ENCODE measurements at regions of chr18 and their contacts with region 1.

Region 1: DNA sequence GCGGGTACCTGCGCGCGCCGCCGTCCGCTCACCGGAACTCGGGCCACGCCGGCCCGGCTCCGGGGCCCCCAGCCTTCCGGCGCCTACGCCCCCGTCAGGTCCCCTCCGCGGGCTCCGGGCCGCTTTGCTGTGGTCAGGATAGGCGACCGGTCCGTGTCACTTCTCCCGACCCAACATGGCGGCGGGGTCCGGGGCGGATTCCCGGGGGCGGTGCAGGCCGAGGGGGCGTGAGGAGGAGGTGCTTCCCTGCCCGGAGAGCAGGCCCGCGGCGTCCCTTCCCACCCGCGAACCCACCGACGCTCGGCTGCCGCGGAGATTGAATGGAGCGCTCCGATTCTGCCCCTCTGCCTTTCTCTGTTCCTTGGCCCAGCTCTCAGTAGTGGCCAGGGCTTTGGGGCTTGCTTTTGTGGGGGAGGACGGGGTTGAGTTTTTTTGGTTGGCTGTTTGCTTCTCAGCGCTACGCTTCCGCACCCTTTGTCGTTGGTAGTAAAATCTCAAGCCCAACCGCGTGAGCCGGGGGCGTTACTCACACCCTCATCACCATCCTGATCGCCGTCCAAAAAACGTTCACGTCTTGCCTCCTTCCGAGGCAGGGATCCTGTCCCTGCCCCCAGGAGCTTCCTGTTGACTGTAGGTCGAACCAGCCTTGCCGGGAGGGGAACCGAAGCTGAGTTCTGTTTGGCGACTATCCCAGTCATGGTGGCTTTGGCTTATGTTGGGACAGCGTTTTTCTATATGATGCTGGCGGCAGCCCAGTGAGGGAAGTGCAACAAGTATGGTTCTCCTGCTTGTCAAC is 532 bp upstream of the YES1 start:
- DNase-seq: peak; percentile 86
- H3K4me3 Mint-ChIP-seq: peak overlapping the region; percentile 87
- H3K27ac Mint-ChIP-seq: peak overlapping the region; percentile 99
- H3K4me1 Mint-ChIP-seq: peaks cover 57% of the 10 kb centered on the region
- H3K27me3 Mint-ChIP-seq: peaks cover 6% of the 10 kb centered on the region

Region 2: GRCh38 chr18:111292-112014 is 701.1 kb before region 1 on chr18:
- CTCF ChIA-PET with region 1: no interaction called
- POLR2A ChIA-PET with region 1: no interaction called
- intact Hi-C with region 1: loop called (anchors 5 kb)
- DNase-seq: peak; percentile 80
- H3K4me3 Mint-ChIP-seq: peak overlapping the region; percentile 73
- H3K27ac Mint-ChIP-seq: peak overlapping the region; percentile 86
- H3K4me1 Mint-ChIP-seq: peaks cover 12% of the 10 kb centered on the region
- H3K27me3 Mint-ChIP-seq: no peaks in the 10 kb centered on the region

Region 3: DNA sequence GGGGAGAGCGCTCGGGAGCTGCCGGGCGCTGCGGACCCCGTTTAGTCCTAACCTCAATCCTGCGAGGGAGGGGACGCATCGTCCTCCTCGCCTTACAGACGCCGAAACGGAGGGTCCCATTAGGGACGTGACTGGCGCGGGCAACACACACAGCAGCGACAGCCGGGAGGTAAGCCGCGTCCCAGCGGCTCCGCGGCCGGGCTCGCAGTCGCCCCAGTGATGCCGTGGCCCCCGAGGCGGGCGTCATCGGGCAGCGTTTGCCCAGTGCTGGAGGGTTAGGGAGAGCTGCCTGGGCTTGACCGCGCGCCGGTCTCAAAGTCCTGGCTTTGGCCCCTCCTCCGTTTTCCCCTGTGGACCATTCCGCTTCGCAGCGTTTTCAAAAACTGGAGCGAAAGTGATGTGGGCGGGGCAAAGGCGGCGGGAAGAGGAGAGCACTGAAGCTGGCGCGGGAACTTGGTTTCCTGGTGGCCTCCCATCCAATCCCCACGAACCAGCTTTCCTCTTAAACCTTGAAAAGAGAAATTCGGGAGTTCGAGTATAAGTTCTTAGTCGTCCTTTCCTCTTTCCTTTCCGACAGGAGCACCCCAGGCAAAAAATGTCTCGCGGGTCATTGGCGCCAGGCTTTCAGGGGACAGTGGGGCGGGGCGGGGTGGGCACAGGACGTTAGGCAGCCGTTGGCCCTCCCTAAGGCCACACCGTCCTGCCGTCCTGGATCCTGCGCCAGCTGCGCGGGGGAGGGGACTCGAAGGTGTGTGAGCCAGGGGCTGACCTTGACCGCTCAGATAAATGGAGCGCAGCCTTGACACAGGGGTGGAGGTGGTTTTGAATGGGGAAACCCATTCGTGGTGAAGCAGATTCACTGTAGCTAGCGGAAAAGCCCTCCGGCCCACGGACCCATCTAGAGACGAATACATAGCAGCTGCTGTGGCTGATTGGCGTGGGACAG is 154.3 kb before region 1 on chr18:
- CTCF ChIA-PET with region 1: no interaction called
- POLR2A ChIA-PET with region 1: interaction called, 16 read pairs
- intact Hi-C with region 1: loop called (anchors 2 kb)
- DNase-seq: peak; percentile 85
- H3K4me3 Mint-ChIP-seq: peak overlapping the region; percentile 92
- H3K27ac Mint-ChIP-seq: peak overlapping the region; percentile 84
- H3K4me1 Mint-ChIP-seq: peaks cover 12% of the 10 kb centered on the region
- H3K27me3 Mint-ChIP-seq: peaks cover 25% of the 10 kb centered on the region

Region 4: GRCh38 chr18:741931-742512 is 70.6 kb before region 1 on chr18:
- CTCF ChIA-PET with region 1: interaction called, 4 read pairs
- POLR2A ChIA-PET with region 1: interaction called, 3 read pairs
- intact Hi-C with region 1: loop called (anchors 5 kb)
- DNase-seq: no peak
- H3K4me3 Mint-ChIP-seq: no peak overlapping the region
- H3K27ac Mint-ChIP-seq: no peak overlapping the region
- H3K4me1 Mint-ChIP-seq: no peaks in the 10 kb centered on the region
- H3K27me3 Mint-ChIP-seq: no peaks in the 10 kb centered on the region

Region 5: DNA sequence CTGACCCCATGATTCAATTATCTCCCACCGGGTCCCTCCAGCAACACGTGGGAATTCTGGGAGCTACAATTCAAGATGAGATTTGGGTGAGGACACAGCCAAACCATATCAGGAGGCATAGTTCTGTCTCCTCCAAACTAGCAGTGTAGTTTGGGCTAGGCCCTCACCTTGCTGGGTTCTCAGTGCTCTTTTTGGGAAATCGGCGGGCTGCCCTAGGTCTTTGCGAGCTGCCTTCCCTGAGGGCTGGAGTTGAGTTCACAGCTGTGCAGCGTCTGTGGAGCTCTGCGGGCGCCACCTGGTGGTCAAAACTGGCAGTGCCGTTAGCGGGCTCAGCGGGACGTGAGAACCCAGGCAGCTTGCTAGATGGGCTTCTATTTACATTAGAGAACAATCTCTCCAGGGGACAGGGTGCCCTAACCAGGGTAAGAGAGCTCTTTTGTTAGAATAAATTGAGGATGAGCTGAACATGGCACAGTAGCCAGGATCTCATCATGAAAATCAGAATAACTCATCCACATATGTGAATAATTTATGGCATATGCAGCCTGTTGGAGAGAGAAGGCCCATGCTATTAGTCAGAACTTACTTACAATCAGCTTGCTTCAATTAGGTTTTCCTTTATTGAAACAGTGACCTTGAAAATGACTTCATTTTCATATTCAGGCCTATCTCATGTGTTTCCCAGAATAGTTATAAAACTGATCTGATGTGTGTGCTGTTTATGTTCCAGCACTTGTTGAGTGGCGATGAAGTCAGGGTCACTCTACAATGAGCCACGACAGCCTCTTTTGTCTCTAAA is 26.8 kb after region 1 on chr18:
- CTCF ChIA-PET with region 1: interaction called, 20 read pairs
- POLR2A ChIA-PET with region 1: no interaction called
- intact Hi-C with region 1: no loop called
- DNase-seq: peak; percentile 91
- H3K4me3 Mint-ChIP-seq: no peak overlapping the region
- H3K27ac Mint-ChIP-seq: no peak overlapping the region
- H3K4me1 Mint-ChIP-seq: no peaks in the 10 kb centered on the region
- H3K27me3 Mint-ChIP-seq: no peaks in the 10 kb centered on the region

Region 6: GRCh38 chr18:2655178-2655953 is 1842.8 kb after region 1 on chr18 and contains the start of gene SMCHD1:
- CTCF ChIA-PET with region 1: no interaction called
- POLR2A ChIA-PET with region 1: no interaction called
- intact Hi-C with region 1: loop called (anchors 5 kb)
- DNase-seq: peak; percentile 94
- H3K4me3 Mint-ChIP-seq: peak within 1 kb of the TSS; percentile 91
- H3K27ac Mint-ChIP-seq: peak within 1 kb of the TSS; percentile 97
- H3K4me1 Mint-ChIP-seq: peaks cover 29% of the 10 kb centered on the region
- H3K27me3 Mint-ChIP-seq: no peaks in the 10 kb centered on the region
- total RNA-seq, gene SMCHD1: 86.0 to 94.5 TPM